AG04449 (cell line): ENCODE measurements at regions of chr17 and their contacts with region 1.

Region 1: GRCh38 chr17:32659419-32659842 is 172.6 kb downstream of the CDK5R1 start:
- DNase-seq: peak; percentile 12
- H3K4me3 ChIP-seq: no peak overlapping the region
- CTCF ChIP-seq: peak; percentile 91

Region 2: GRCh38 chr17:32486111-32486700 is 173.2 kb before region 1 on chr17:
- CTCF ChIA-PET with region 1: interaction called, 27 read pairs
- POLR2A ChIA-PET with region 1: no interaction called
- DNase-seq: no peak
- H3K4me3 ChIP-seq: peak overlapping the region; percentile 62
- CTCF ChIP-seq: no peak

Region 3: GRCh38 chr17:32621617-32622312 is 37.7 kb before region 1 on chr17:
- CTCF ChIA-PET with region 1: no interaction called
- POLR2A ChIA-PET with region 1: no interaction called
- DNase-seq: no peak
- H3K4me3 ChIP-seq: no peak overlapping the region
- CTCF ChIP-seq: no peak

Region 4: DNA sequence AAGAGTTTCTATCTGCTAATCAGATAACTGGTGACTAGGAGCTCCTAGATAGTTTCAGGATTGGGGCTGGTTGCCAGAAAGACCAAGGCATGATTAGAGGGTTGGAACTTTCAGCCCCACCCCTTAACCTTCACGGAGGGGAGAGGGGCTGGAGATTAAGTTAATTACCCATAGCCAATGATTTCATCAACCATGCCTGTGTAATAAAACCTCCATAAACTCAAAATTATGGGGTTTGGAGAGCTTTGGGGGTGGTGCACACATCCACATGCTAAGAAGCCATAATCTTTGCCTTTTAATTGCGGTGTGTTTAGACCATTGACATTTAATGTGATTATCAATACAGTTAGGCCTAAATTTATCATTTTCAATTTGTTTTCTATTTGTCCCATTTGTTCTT is 11.0 kb before region 1 on chr17:
- CTCF ChIA-PET with region 1: interaction called, 44 read pairs
- POLR2A ChIA-PET with region 1: no interaction called
- DNase-seq: no peak
- H3K4me3 ChIP-seq: no peak overlapping the region
- CTCF ChIP-seq: no peak

Region 5: DNA sequence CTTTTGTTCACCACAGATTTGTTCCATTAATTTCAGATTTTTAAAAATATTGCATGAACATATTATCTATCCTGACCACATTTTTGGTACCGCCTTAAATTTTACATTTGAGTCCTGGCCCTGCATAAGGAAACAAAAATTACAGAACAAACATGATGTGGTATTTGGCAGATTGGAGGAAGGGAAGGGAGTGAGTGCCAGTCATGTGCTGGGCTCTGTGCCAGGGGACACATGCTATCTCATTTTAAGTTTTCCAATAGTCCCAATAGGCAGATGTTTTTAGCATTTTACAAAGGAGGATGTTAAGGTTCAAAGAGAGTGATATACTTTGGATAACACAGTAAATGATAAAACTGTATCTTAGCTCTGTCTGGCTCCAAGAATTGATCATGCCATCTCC is 12.5 kb after region 1 on chr17:
- CTCF ChIA-PET with region 1: interaction called, 16 read pairs
- POLR2A ChIA-PET with region 1: no interaction called
- DNase-seq: no peak
- H3K4me3 ChIP-seq: no peak overlapping the region
- CTCF ChIP-seq: no peak

Region 6: DNA sequence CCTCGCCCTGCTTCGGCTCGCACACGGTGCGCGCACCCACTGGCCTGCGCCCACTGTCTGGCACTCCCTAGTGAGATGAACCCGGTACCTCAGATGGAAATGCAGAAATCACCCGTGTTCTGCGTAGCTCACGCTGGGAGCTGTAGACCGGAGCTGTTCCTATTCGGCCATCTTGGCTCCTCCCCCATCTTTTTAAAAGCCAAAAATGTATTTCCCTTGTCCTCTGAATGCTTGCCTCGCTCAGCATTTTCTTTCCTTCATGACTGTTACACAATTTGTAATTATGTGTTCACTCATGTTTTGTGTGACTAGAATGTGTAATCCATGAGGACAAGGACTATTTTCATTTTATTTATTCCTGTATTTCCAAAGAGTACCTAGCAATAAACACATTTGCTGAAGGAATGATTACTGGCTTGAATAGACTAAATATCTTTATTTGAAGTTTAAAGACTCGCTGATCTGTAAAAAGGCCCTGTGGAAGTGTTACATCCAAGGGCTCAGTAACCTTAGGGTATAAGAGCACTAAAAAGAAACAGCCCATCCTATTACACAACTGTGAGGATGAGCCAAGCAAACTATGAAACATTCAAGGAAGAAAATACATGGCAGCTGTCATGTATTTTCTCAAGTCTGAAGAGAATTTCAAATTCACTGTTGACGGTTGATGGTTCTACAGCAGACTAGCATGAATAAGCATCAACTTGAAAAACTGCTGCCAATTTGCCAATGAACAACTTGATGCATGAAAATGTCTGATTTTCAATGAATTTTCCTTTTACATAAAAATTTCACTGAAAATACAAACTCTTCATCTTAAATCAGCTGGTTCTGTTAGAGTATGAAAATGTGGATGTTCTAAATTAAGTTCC is 24.9 kb after region 1 on chr17:
- CTCF ChIA-PET with region 1: no interaction called
- POLR2A ChIA-PET with region 1: no interaction called
- DNase-seq: no peak
- H3K4me3 ChIP-seq: no peak overlapping the region
- CTCF ChIP-seq: no peak

Region 7: DNA sequence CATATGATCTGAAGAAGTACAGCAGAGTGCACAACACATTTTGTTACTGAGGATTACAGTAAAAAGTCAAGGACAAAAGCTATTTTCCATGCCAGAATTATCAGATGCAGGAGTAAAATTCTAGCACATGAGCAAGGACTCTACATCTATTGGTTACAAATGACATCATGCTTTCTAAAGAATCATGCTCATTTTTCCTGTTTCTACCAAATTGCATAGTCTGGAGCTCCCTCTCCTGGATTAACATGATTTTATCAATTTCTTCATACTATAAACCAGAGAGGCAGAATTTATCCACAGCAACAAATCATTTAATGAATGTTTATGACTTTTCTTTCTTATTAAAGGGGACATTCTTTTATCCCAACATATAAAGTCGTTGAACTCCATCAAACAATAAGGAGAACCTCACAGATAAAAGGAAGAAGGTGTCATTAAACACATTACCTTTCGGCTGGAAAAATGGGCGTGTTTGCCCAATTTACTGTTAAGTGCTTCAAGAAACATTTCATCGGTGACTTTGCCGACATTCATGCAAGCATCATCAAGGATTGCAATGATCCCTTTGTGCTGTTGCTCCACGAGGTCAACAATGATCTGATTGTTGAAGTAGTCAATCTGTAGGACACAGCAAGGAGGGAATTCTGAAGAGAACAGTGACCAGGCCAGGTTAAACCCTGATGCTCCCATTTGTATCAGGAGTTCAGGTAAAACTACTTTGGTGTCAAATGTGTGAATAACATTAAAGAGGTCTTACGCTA is 95.8 kb after region 1 on chr17:
- CTCF ChIA-PET with region 1: interaction called, 13 read pairs
- POLR2A ChIA-PET with region 1: no interaction called
- DNase-seq: peak; percentile 41
- H3K4me3 ChIP-seq: no peak overlapping the region
- CTCF ChIP-seq: peak; percentile 33